ENCODE measurements at regions of chr7 and their contacts with region 1.

Region 1: DNA sequence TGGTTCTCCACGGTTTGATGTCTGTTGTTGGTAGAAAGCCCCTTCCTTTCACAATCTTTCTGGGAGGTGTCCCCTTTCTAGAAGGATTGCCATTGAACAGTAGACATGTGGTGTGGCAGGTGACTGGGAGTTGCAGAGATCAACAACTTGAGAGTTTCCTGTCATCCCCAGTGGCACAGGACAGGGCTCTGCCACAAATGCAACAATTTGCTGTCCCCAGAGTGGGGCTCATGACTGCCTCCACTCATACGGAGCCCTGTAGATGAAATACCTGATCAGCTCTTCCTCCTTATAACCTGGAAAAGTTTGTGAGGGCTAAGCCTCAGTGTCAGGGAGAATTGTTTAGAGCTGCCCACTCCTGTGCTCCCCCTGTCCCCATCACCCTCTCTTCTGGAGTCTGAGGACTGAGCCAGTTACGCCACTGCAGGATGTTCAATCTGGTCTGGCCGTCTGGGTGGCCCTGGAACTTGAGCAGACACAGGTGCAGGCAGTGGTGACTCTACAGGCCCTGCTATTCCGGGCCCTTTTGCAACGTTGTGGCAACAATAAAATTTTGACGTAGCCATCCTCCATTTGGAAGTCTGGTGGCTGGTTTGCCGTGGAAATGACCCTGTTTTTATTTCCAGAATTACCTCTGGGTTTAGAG is 6.5 kb downstream of the DBNL start:
- DNase-seq: no peak
- H3K4me3 Mint-ChIP-seq: no peak overlapping the region
- H3K27ac Mint-ChIP-seq: peak overlapping the region; percentile 47
- H3K4me1 Mint-ChIP-seq: peaks cover 62% of the 10 kb centered on the region
- H3K27me3 Mint-ChIP-seq: no peaks in the 10 kb centered on the region

Region 2: GRCh38 chr7:44065436-44066118 is 14.5 kb after region 1 on chr7 and contains the start of gene PGAM2:
- CTCF ChIA-PET with region 1: interaction called, 3 read pairs
- POLR2A ChIA-PET with region 1: interaction called, 73 read pairs
- DNase-seq: no peak
- H3K4me3 Mint-ChIP-seq: no peak within 1 kb of the TSS
- H3K27ac Mint-ChIP-seq: no peak within 1 kb of the TSS
- H3K4me1 Mint-ChIP-seq: peaks cover 6% of the 10 kb centered on the region
- H3K27me3 Mint-ChIP-seq: no peaks in the 10 kb centered on the region
- total RNA-seq, gene PGAM2: 0.43 TPM in 1 of 2 experiments, not detected in the other

Region 3: DNA sequence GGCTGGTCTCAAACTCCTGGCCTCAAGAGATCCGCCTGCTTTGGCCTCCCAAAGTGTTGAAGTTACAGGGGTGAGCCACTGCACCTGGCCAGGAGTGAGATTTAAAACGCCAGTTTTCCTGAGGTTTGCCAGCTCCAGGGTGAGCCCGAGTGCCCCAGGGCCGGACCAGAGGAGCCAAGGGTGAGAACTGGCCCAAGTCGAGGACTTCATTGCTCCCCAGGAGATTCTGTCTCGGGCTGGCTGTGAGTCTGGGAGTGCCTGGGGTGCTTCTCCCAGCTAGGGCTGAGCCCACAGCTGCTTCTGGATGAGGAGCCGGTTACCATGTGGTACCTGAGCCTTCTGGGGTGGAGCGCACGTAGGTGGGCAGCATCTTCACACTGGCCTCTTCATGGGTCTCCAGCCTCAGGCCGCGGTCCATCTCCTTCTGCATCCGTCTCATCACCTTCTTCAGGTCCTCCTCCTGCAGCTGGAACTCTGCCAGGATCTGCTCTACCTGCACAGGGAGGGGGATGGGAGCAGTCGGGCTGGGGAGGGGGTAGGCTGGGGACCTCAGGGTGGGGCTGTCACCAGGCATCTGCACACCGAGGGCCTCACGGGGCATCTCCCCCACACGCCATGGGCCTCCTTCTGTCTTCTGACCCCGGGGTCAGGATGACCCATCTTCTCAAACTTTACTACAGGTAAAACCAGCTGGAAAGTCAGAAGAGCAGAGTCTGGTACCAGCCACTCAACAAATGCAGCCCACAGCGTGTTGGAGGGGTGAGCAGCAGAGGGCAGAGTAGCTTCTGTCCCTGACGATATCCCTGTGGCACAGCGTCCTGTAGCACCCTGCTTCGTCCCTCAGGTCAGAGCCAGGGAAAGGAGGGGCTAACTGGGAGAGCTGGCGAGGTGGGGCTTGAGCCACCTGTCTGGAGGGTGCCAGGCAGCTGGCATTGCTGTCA is 102.2 kb after region 1 on chr7:
- CTCF ChIA-PET with region 1: no interaction called
- POLR2A ChIA-PET with region 1: no interaction called
- DNase-seq: no peak
- H3K4me3 Mint-ChIP-seq: no peak overlapping the region
- H3K27ac Mint-ChIP-seq: no peak overlapping the region
- H3K4me1 Mint-ChIP-seq: no peaks in the 10 kb centered on the region
- H3K27me3 Mint-ChIP-seq: no peaks in the 10 kb centered on the region

Measured in activated CD4-positive, alpha-beta memory T cell treated with anti-CD3 and anti-CD28 coated beads, Interleukin-2, amount 10 ng/mL, durations not matched to agents 7 days and 5 days (primary cell).